ENCODE measurements at regions of chr17 and their contacts with region 1.

Region 1: GRCh38 chr17:75154195-75155106 is at the start of gene JPT1:
- DNase-seq: peak; percentile 85
- ATAC-seq: peak; percentile 97
- H3K4me3 Mint-ChIP-seq: peak within 1 kb of the TSS; percentile 91
- H3K27ac Mint-ChIP-seq: peak within 1 kb of the TSS; percentile 77
- H3K4me1 Mint-ChIP-seq: peaks cover 34% of the 10 kb centered on the region
- H3K27me3 Mint-ChIP-seq: no peaks in the 10 kb centered on the region
- CTCF ChIP-seq: no peak
- total RNA-seq, gene JPT1: 70.5 and 72.9 TPM in 2 replicates

Region 2: GRCh38 chr17:75116737-75117136 is 37.7 kb before region 1 on chr17:
- CTCF ChIA-PET with region 1: interaction called, 4 read pairs
- POLR2A ChIA-PET with region 1: interaction called, 20 read pairs
- intact Hi-C with region 1: loop called (anchors 1 kb)
- DNase-seq: no peak
- ATAC-seq: no peak
- H3K4me3 Mint-ChIP-seq: no peak overlapping the region
- H3K27ac Mint-ChIP-seq: no peak overlapping the region
- H3K4me1 Mint-ChIP-seq: peaks cover 64% of the 10 kb centered on the region
- H3K27me3 Mint-ChIP-seq: no peaks in the 10 kb centered on the region
- CTCF ChIP-seq: no peak

Region 3: GRCh38 chr17:75173526-75173925 is 19.1 kb after region 1 on chr17:
- CTCF ChIA-PET with region 1: interaction called, 3 read pairs
- POLR2A ChIA-PET with region 1: interaction called, 8 read pairs
- intact Hi-C with region 1: loop called (anchors 2 kb)
- DNase-seq: no peak
- ATAC-seq: no peak
- H3K4me3 Mint-ChIP-seq: no peak overlapping the region
- H3K27ac Mint-ChIP-seq: peak overlapping the region; percentile 46
- H3K4me1 Mint-ChIP-seq: peaks cover 16% of the 10 kb centered on the region
- H3K27me3 Mint-ChIP-seq: no peaks in the 10 kb centered on the region
- CTCF ChIP-seq: no peak

Region 4: DNA sequence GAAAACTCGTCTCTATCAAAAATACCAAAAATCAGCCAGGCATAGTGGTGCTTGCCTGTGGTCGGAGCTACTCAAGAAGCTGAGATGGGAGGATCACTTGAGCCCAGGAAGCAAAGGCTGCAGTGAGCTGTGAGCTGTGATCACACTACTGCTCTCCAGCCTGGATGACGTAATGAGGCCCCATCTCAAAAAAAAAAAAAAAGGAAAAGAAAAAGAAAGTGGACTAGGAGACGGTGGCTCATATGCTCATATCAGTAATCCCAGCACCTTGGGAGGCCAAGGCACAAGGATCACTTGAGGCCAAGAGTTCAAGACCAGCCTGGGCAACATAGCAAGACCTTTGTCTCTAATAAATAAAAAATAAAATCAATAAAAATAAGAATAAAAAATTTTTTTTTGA is 37.1 kb after region 1 on chr17:
- CTCF ChIA-PET with region 1: no interaction called
- POLR2A ChIA-PET with region 1: no interaction called
- intact Hi-C with region 1: no loop called
- DNase-seq: no peak
- ATAC-seq: no peak
- H3K4me3 Mint-ChIP-seq: no peak overlapping the region
- H3K27ac Mint-ChIP-seq: no peak overlapping the region
- H3K4me1 Mint-ChIP-seq: no peaks in the 10 kb centered on the region
- H3K27me3 Mint-ChIP-seq: no peaks in the 10 kb centered on the region
- CTCF ChIP-seq: no peak

Measured in activated B cell treated with CpG ODN at 0.5 μM for 24 hours (primary cell).